Left colon (tissue), 2 donors: ENCODE measurements at regions of chr4 and their contacts with region 1.

Region 1: DNA sequence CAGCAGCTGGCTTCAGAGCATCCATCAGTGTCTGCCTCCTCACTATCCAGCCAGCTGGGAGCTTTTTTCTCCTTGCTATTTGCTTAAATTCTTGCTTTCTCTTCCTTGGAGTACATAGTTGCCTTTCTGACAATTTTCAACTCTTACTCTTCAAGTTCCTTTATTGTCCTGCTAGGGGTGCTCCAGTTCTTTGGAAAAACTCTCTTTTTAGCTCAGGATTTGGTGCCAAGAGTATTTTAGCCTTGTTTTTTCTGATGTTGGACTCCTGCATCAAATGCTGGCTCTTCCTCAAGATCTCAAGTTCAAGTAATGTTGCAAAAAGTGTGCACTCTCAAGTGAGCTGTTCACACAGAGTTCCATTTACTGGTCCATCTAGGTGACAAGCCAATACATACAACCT is 126.4 kb downstream of the KDR start:
- DNase-seq: no peak
- ATAC-seq: no peak

Region 2: GRCh38 chr4:54781756-54782155 is 217.2 kb before region 1 on chr4:
- intact Hi-C with region 1: no loop called
- DNase-seq: no peak
- ATAC-seq: no peak

Region 3: DNA sequence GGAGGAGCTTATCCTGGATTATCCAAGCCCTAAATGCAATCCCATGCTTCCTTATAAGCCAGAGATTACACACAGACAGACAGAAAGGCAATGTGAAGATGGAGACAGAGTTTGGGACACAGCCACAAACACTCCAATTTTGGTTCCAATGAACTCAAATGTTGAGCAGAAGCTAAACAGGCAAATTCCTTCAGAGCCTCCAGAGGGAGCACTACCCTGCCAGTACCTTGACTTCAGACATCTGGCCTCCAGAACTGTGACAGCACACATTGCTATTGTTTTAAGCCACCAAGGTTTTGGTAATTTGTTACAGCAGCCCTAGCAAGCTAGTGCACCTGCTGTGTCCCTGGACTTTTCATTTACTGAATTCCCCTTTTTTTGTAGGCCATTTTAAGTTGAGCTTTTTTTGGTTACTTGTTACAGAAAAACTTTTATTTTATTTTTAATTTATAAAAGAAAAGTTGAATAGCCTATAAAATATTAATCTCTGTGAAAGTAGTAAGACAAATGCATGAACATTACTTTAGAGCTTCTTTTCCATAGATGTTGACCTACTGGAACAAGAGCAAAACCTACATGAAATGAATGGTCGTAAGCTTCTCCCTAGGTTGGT is 313.6 kb after region 1 on chr4:
- intact Hi-C with region 1: loop called in 1 of 2 experiments (anchors 10 kb)
- DNase-seq: peak; percentile 28 to 29
- ATAC-seq: peak; percentile 66